Sigmoid colon (tissue), 7 donors: ENCODE measurements at regions of chr2 and their contacts with region 1.

Region 1: GRCh38 chr2:159131914-159132281 is 154.6 kb downstream of the WDSUB1 start:
- DNase-seq: no peak
- H3K4me3 ChIP-seq: no peak overlapping the region
- H3K27ac ChIP-seq: peak overlapping the region in 3 of 4 donors; percentile 40 to 59 (median 55)
- H3K4me1 ChIP-seq: peaks cover 0 to 70% (median 60%) of the 10 kb centered on the region in 4 donors
- H3K27me3 ChIP-seq: no peaks in the 10 kb centered on the region
- CTCF ChIP-seq: no peak
- EP300 ChIP-seq: no peak
- POLR2A ChIP-seq: no peak

Region 2: DNA sequence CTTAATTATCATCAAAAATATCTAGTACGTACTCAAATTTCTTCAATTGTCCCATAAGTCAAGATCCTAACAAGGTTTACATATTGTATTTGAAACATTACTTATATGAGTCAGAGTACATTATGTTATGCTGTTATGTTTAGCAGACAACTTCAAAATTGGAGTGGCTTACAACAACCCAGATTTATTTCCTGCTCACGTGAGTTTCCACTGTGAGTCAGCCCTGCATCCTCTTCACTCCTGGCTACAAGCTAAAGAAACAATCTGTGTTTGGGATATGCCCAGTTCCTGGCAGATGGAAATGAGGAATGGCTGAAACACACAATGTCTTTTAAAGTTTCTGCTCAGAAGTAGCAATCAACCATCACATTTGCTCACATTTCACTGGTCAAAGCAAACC is 194.9 kb before region 1 on chr2:
- intact Hi-C with region 1: no loop called
- DNase-seq: peak; percentile 76
- H3K4me3 ChIP-seq: no peak overlapping the region
- H3K27ac ChIP-seq: peak overlapping the region in 3 of 4 donors; percentile 21 to 64 (median 61)
- H3K4me1 ChIP-seq: peaks cover 0 to 13% (median 2%) of the 10 kb centered on the region in 4 donors
- H3K27me3 ChIP-seq: no peaks in the 10 kb centered on the region
- CTCF ChIP-seq: no peak
- EP300 ChIP-seq: peak; percentile 46 to 94 (median 74)
- POLR2A ChIP-seq: no peak

Region 3: GRCh38 chr2:159307942-159308341 is 176.0 kb after region 1 on chr2:
- intact Hi-C with region 1: no loop called
- DNase-seq: no peak
- H3K4me3 ChIP-seq: no peak overlapping the region
- H3K27ac ChIP-seq: no peak overlapping the region
- H3K4me1 ChIP-seq: no peaks in the 10 kb centered on the region
- H3K27me3 ChIP-seq: no peaks in the 10 kb centered on the region
- CTCF ChIP-seq: no peak
- EP300 ChIP-seq: no peak
- POLR2A ChIP-seq: no peak

Region 4: GRCh38 chr2:159557451-159558034 is 425.6 kb after region 1 on chr2:
- intact Hi-C with region 1: no loop called
- DNase-seq: no peak
- H3K4me3 ChIP-seq: no peak overlapping the region
- H3K27ac ChIP-seq: no peak overlapping the region
- H3K4me1 ChIP-seq: peaks cover 0 to 19% (median 9%) of the 10 kb centered on the region in 4 donors
- H3K27me3 ChIP-seq: no peaks in the 10 kb centered on the region
- CTCF ChIP-seq: peak in 2 of 4 experiments; percentile 39 to 45
- EP300 ChIP-seq: no peak
- POLR2A ChIP-seq: no peak

Region 5: DNA sequence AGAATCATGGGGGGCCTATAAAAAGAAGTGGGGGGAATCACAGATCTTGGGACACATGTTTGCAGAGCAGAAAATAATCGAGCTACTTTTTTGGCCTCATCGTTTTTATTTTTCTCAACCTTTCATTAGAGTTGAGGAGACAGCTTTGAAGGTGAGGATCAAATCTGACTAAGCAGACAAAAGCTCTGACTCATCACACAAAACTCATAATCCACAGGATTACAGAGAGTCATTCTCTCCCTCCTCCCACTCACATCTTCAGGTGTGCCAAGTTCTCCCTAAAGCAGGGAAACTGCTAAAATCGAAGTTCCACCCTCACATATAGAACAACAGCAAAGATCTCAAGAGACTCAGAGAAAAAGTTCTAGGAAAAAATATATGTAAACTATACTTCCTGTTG is 468.9 kb after region 1 on chr2:
- intact Hi-C with region 1: loop called (anchors 10 kb)
- DNase-seq: no peak
- H3K4me3 ChIP-seq: no peak overlapping the region
- H3K27ac ChIP-seq: no peak overlapping the region
- H3K4me1 ChIP-seq: peaks cover 0 to 22% (median 12%) of the 10 kb centered on the region in 4 donors
- H3K27me3 ChIP-seq: no peaks in the 10 kb centered on the region
- CTCF ChIP-seq: no peak
- EP300 ChIP-seq: no peak
- POLR2A ChIP-seq: no peak